MCF 10A (cell line): ENCODE measurements at regions of chr6 and their contacts with region 1.

Region 1: GRCh38 chr6:149846321-149846720 is 17.8 kb downstream of the LRP11 start:
- DNase-seq: peak; percentile 94
- H3K4me3 Mint-ChIP-seq: peak overlapping the region; percentile 38
- H3K27ac Mint-ChIP-seq: no peak overlapping the region
- H3K4me1 Mint-ChIP-seq: peaks cover 49% of the 10 kb centered on the region
- H3K27me3 Mint-ChIP-seq: no peaks in the 10 kb centered on the region
- CTCF ChIP-seq: no peak

Region 2: GRCh38 chr6:148240461-148240840 is 1605.9 kb before region 1 on chr6:
- CTCF ChIA-PET with region 1: no interaction called
- POLR2A ChIA-PET with region 1: no interaction called
- intact Hi-C with region 1: no loop called
- DNase-seq: no peak
- H3K4me3 Mint-ChIP-seq: no peak overlapping the region
- H3K27ac Mint-ChIP-seq: no peak overlapping the region
- H3K4me1 Mint-ChIP-seq: peaks cover 29% of the 10 kb centered on the region
- H3K27me3 Mint-ChIP-seq: no peaks in the 10 kb centered on the region
- CTCF ChIP-seq: no peak

Region 3: GRCh38 chr6:149529650-149530049 is 316.7 kb before region 1 on chr6:
- CTCF ChIA-PET with region 1: no interaction called
- POLR2A ChIA-PET with region 1: no interaction called
- intact Hi-C with region 1: no loop called
- DNase-seq: no peak
- H3K4me3 Mint-ChIP-seq: no peak overlapping the region
- H3K27ac Mint-ChIP-seq: no peak overlapping the region
- H3K4me1 Mint-ChIP-seq: no peaks in the 10 kb centered on the region
- H3K27me3 Mint-ChIP-seq: no peaks in the 10 kb centered on the region
- CTCF ChIP-seq: no peak

Region 4: GRCh38 chr6:149834513-149835481 is 11.5 kb before region 1 on chr6:
- CTCF ChIA-PET with region 1: interaction called, 40 read pairs
- POLR2A ChIA-PET with region 1: interaction called, 9 read pairs
- intact Hi-C with region 1: no loop called
- DNase-seq: peak; percentile 80
- H3K4me3 Mint-ChIP-seq: no peak overlapping the region
- H3K27ac Mint-ChIP-seq: no peak overlapping the region
- H3K4me1 Mint-ChIP-seq: no peaks in the 10 kb centered on the region
- H3K27me3 Mint-ChIP-seq: no peaks in the 10 kb centered on the region
- CTCF ChIP-seq: peak; percentile 80

Region 5: DNA sequence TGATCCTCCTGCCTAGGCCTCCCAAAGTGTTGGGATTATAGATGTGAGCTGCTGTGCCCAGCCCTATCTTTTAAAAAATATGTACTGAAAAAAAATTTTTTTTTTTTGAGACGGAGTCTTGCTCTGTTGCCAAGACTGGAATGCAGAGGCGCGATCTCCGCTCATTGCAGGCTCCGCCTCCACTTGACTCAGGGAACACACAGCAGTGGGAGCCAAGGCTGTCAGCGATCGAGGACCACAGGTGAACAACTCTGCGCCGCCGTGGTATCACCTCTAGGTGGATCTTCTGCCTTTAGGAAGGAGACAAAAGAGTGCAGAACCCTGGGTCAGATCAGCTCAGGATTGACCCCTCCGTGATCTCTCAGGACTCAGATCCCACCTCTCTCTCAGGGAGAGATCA is 37.9 kb after region 1 on chr6:
- CTCF ChIA-PET with region 1: interaction called, 3 read pairs
- POLR2A ChIA-PET with region 1: interaction called, 49 read pairs
- intact Hi-C with region 1: no loop called
- DNase-seq: no peak
- H3K4me3 Mint-ChIP-seq: no peak overlapping the region
- H3K27ac Mint-ChIP-seq: peak overlapping the region; percentile 32
- H3K4me1 Mint-ChIP-seq: peaks cover 28% of the 10 kb centered on the region
- H3K27me3 Mint-ChIP-seq: no peaks in the 10 kb centered on the region
- CTCF ChIP-seq: no peak

Region 6: GRCh38 chr6:149890629-149891045 is 44.3 kb after region 1 on chr6:
- CTCF ChIA-PET with region 1: interaction called, 14 read pairs
- POLR2A ChIA-PET with region 1: interaction called, 49 read pairs
- intact Hi-C with region 1: loop called (anchors 2 kb)
- DNase-seq: peak; percentile 79
- H3K4me3 Mint-ChIP-seq: peak overlapping the region; percentile 62
- H3K27ac Mint-ChIP-seq: peak overlapping the region; percentile 69
- H3K4me1 Mint-ChIP-seq: peaks cover 57% of the 10 kb centered on the region
- H3K27me3 Mint-ChIP-seq: no peaks in the 10 kb centered on the region
- CTCF ChIP-seq: no peak

Region 7: GRCh38 chr6:149895833-149896271 is 49.5 kb after region 1 on chr6:
- CTCF ChIA-PET with region 1: interaction called, 14 read pairs
- POLR2A ChIA-PET with region 1: interaction called, 29 read pairs
- intact Hi-C with region 1: loop called (anchors 2 kb)
- DNase-seq: peak; percentile 92
- H3K4me3 Mint-ChIP-seq: peak overlapping the region; percentile 41
- H3K27ac Mint-ChIP-seq: peak overlapping the region; percentile 85
- H3K4me1 Mint-ChIP-seq: peaks cover 69% of the 10 kb centered on the region
- H3K27me3 Mint-ChIP-seq: no peaks in the 10 kb centered on the region
- CTCF ChIP-seq: no peak